ENCODE measurements at regions of chr11 and their contacts with region 1.

Region 1: GRCh38 chr11:77473801-77474683 is at the start of gene PAK1:
- DNase-seq: peak; percentile 94 to 97 (median 96)
- H3K4me3 ChIP-seq: peak within 1 kb of the TSS; percentile 67
- H3K27ac ChIP-seq: peak within 1 kb of the TSS; percentile 86 to 90
- H3K4me1 ChIP-seq: peaks cover 5% of the 10 kb centered on the region
- H3K27me3 ChIP-seq: no peaks in the 10 kb centered on the region
- CTCF ChIP-seq: peak in 1 of 3 donors; percentile 53
- EP300 ChIP-seq: no peak
- POLR2A ChIP-seq: peak; percentile 41
- total RNA-seq, gene PAK1: 31.2 to 48.1 (median 42.3) TPM

Region 2: GRCh38 chr11:77361184-77361583 is 112.9 kb before region 1 on chr11:
- intact Hi-C with region 1: no loop called
- DNase-seq: no peak
- H3K4me3 ChIP-seq: no peak overlapping the region
- H3K27ac ChIP-seq: no peak overlapping the region
- H3K4me1 ChIP-seq: no peaks in the 10 kb centered on the region
- H3K27me3 ChIP-seq: no peaks in the 10 kb centered on the region
- CTCF ChIP-seq: no peak
- EP300 ChIP-seq: no peak
- POLR2A ChIP-seq: no peak

Region 3: GRCh38 chr11:77589521-77590193 is 115.6 kb after region 1 on chr11 and contains the start of gene AQP11:
- intact Hi-C with region 1: loop called in 1 of 4 experiments (anchors 10 kb)
- DNase-seq: peak; percentile 88 to 91 (median 90)
- H3K4me3 ChIP-seq: peak within 1 kb of the TSS; percentile 47
- H3K27ac ChIP-seq: peak within 1 kb of the TSS; percentile 82 to 90
- H3K4me1 ChIP-seq: peaks cover 9% of the 10 kb centered on the region
- H3K27me3 ChIP-seq: no peaks in the 10 kb centered on the region
- CTCF ChIP-seq: no peak
- EP300 ChIP-seq: no peak
- POLR2A ChIP-seq: peak; percentile 55
- total RNA-seq, gene AQP11: 4.9 to 14.2 (median 10.3) TPM

Region 4: DNA sequence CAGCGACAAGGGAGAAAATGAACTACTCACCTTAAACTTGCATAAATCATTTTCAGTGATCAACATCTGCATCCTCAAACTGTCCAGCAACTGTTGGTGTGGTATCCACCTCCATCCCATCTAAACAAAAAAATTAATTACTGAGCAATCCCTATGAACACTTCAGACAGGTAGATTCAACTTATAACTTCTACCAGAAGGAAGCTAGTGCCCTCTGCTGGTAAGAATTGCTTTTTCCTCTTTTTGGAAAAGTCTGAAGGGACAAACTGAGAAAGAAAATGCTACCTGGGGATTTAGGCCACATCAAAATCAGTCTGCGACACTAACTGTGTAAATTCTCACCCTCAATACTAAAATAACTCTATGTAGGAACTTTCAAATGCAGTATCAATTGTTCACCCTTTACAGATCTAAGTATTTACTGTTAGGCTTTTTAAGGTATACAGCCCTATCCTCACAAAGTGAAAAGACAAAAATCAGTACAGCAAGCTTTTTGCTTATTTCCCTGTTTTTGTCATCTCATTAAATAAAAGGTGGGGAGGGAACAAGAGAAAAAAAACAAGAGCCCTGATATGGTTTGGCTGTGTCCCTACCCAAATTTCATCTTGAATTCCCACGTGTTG is 145.6 kb after region 1 on chr11:
- intact Hi-C with region 1: loop called in 1 of 4 experiments (anchors 10 kb)
- DNase-seq: no peak
- H3K4me3 ChIP-seq: no peak overlapping the region
- H3K27ac ChIP-seq: no peak overlapping the region
- H3K4me1 ChIP-seq: peaks cover 2% of the 10 kb centered on the region
- H3K27me3 ChIP-seq: no peaks in the 10 kb centered on the region
- CTCF ChIP-seq: peak; percentile 33 to 74 (median 68)
- EP300 ChIP-seq: no peak
- POLR2A ChIP-seq: no peak